Pancreas (tissue), 10 donors: ENCODE measurements at regions of chr19 and their contacts with region 1.

Region 1: DNA sequence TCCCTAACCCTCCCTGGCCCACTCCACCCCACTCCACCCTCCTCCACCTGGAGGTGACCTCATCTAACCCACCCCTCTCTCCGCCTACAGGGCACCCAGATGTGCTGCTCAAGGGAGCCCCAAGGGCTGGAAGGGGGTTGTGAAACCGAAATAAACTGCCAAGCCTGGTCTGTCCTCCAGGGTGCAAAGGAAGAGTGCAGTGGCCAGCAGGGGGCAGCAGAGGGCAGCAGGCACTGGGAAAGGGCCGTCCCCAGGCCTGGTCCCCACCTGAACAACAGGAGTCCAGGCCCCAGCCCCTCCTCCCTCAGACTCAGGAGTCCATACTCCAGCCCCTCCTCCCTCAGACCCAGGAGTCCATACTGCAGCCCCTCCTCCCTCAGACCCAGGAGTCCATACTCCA is 8.4 kb upstream of the BCAM start:
- DNase-seq: peak; percentile 75 to 98 (median 88)
- ATAC-seq: peak; percentile 86 to 93 (median 88)
- H3K4me3 ChIP-seq: no peak overlapping the region
- H3K27ac ChIP-seq: no peak overlapping the region
- H3K4me1 ChIP-seq: peaks cover 0 to 12% (median 0%) of the 10 kb centered on the region in 3 donors
- H3K27me3 ChIP-seq: no peaks in the 10 kb centered on the region
- CTCF ChIP-seq: peak; percentile 91 to 96 (median 92)

Region 2: GRCh38 chr19:44635581-44636438 is 164.7 kb before region 1 on chr19:
- intact Hi-C with region 1: no loop called
- DNase-seq: no peak
- ATAC-seq: peak in 2 of 4 donors; percentile 36 to 47
- H3K4me3 ChIP-seq: no peak overlapping the region
- H3K27ac ChIP-seq: no peak overlapping the region
- H3K4me1 ChIP-seq: no peaks in the 10 kb centered on the region
- H3K27me3 ChIP-seq: no peaks in the 10 kb centered on the region
- CTCF ChIP-seq: no peak

Region 3: DNA sequence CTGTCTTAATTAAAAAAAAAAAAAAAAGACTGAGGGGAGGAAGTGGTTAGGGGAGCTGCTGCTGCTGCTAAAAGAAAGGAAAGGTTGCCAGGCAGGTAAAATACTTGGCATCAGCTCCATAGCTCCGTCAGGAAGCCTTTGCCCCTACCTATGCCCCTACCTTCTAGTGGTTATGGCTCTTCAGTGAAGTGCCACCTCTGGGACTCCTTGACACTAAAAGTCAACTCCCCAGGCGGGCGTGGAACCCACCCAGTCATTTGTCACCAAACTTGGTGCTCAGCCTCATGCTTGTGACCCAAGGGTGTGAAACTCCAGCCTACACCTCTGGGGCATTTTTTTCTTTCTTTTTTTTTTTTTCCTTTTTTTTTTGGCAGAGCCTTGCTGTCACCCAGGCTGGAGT is 40.8 kb after region 1 on chr19:
- intact Hi-C with region 1: loop called in 2 of 3 experiments (anchors 5 kb)
- DNase-seq: no peak
- ATAC-seq: no peak
- H3K4me3 ChIP-seq: no peak overlapping the region
- H3K27ac ChIP-seq: no peak overlapping the region
- H3K4me1 ChIP-seq: peaks cover 0 to 6% (median 4%) of the 10 kb centered on the region in 3 donors
- H3K27me3 ChIP-seq: no peaks in the 10 kb centered on the region
- CTCF ChIP-seq: no peak

Region 4: DNA sequence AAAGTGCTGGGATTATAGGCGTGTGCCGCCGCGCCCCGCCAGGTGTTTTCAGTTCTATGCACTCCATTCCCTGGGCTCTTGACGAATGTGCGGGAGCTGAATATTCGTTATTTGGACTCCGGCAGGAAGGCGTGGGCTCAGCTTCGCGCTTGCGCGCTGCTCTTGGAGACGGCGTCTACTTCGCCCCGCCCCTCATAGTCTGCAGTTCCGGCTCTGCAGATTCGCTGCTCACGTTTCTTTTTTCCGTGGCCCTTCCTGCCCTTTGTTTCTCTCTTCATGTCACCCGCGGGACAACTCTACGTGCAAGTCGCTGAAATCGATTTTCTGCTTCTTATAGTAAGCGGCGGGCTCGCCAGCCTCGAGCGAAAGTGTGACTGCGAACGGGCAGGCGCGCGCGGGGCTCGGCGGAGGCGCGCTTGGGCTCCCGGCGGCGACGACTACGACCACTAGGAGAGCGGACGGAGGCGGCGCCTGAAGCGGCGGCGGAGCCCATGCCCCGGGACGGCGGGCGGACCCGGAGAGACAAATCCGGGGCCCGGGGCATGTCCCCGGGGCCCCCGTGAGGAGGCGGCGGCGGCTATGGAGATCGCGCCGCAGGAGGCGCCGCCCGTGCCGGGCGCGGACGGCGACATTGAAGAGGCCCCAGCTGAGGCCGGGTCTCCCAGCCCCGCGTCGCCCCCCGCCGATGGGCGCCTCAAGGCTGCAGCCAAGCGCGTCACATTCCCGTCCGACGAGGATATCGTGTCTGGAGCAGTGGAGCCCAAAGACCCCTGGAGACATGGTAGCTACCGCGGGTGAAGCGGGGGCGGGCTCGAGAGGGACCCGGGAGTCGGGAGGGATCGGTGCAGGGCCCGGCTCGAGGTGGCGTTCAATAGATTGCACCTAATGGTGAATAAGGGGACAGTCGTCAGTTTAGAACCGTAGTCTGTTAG is 292.6 kb after region 1 on chr19 and contains the start of gene PPP1R37:
- intact Hi-C with region 1: no loop called
- DNase-seq: peak; percentile 93 to 98 (median 95)
- ATAC-seq: peak; percentile 80 to 91 (median 85)
- H3K4me3 ChIP-seq: peak within 1 kb of the TSS; percentile 85 to 97 (median 94)
- H3K27ac ChIP-seq: peak within 1 kb of the TSS; percentile 77 to 94 (median 84)
- H3K4me1 ChIP-seq: peaks cover 13 to 24% (median 13%) of the 10 kb centered on the region in 3 donors
- H3K27me3 ChIP-seq: no peaks in the 10 kb centered on the region
- CTCF ChIP-seq: peak in 1 of 4 donors; percentile 24
- total RNA-seq, gene PPP1R37: 13.0 to 18.7 (median 15.1) TPM